ENCODE measurements at regions of chr11 and their contacts with region 1.

Region 1: GRCh38 chr11:24747275-24748251 is 250.7 kb downstream of the LUZP2 start:
- DNase-seq: no peak
- H3K4me3 ChIP-seq: no peak overlapping the region
- H3K27ac ChIP-seq: no peak overlapping the region
- H3K4me1 ChIP-seq: no peaks in the 10 kb centered on the region; a peak in 1 of 7 replicates
- H3K27me3 ChIP-seq: no peaks in the 10 kb centered on the region
- CTCF ChIP-seq: no peak
- EP300 ChIP-seq: no peak
- POLR2A ChIP-seq: no peak
- RAD21 ChIP-seq: no peak

Region 2: DNA sequence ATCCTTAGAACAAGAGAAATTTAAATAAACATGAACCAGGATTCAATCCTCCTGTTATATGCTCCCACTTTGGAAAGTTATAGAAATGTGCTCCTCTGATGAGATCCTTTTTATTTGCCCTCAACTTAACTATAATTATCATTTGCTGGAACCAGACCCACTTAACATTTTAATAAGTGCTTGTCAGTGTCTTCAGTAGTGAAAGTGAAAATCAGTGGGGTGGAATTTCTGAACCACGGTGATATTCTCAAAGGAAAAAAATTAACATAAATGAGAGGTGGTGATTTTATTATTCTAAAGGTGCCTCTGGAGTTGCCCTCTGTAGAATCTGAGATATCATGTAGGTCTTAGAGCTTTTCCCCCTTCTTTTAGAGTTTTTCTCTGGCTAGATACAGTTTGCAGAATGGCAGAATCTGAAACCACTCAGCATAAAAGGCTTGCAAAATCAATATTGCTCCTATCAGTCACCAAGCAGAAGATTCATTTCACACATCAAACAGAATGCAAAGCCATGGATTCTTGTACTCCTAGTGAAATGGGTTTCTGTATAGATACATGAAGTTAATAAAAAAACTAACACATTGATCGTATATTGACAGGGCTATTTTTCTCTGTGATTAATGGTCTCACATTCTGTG is 37.5 kb before region 1 on chr11:
- CTCF ChIA-PET with region 1: no interaction called
- POLR2A ChIA-PET with region 1: no interaction called
- DNase-seq: no peak
- H3K4me3 ChIP-seq: no peak overlapping the region
- H3K27ac ChIP-seq: no peak overlapping the region
- H3K4me1 ChIP-seq: peaks cover 0 to 5% (median 1%) of the 10 kb centered on the region in 4 experiments; a peak in 3 of 7 replicates
- H3K27me3 ChIP-seq: peaks cover 0 to 1% (median 0%) of the 10 kb centered on the region in 4 experiments; a peak in 1 of 7 replicates
- CTCF ChIP-seq: no peak
- EP300 ChIP-seq: no peak
- POLR2A ChIP-seq: no peak
- RAD21 ChIP-seq: no peak

Region 3: GRCh38 chr11:24734742-24735237 is 12.8 kb before region 1 on chr11:
- CTCF ChIA-PET with region 1: interaction called, 10 read pairs
- POLR2A ChIA-PET with region 1: no interaction called
- DNase-seq: no peak
- H3K4me3 ChIP-seq: no peak overlapping the region
- H3K27ac ChIP-seq: no peak overlapping the region
- H3K4me1 ChIP-seq: peaks cover 0 to 3% (median 0%) of the 10 kb centered on the region in 4 experiments; a peak in 1 of 7 replicates
- H3K27me3 ChIP-seq: no peaks in the 10 kb centered on the region
- CTCF ChIP-seq: no peak
- EP300 ChIP-seq: no peak
- POLR2A ChIP-seq: no peak
- RAD21 ChIP-seq: no peak